ENCODE measurements at regions of chr19 and their contacts with region 1.

Region 1: GRCh38 chr19:36573020-36573885 is at the start of gene ZNF529:
- DNase-seq: peak; percentile 95 to 99 (median 98)
- H3K4me3 ChIP-seq: peak within 1 kb of the TSS; percentile 66 to 94 (median 90)
- H3K27ac ChIP-seq: peak within 1 kb of the TSS; percentile 90 to 96
- H3K4me1 ChIP-seq: peaks cover 9 to 22% (median 12%) of the 10 kb centered on the region in 4 experiments
- H3K27me3 ChIP-seq: no peaks in the 10 kb centered on the region

Region 2: GRCh38 chr19:36528194-36528920 is 44.9 kb before region 1 on chr19 and contains the start of gene ZNF260:
- CTCF ChIA-PET with region 1: no interaction called
- POLR2A ChIA-PET with region 1: interaction called, 10 read pairs
- DNase-seq: peak; percentile 98 to 99 (median 99)
- H3K4me3 ChIP-seq: peak within 1 kb of the TSS; percentile 48 to 99 (median 93)
- H3K27ac ChIP-seq: peak within 1 kb of the TSS; percentile 82 to 92
- H3K4me1 ChIP-seq: peaks cover 7 to 19% (median 12%) of the 10 kb centered on the region in 4 experiments
- H3K27me3 ChIP-seq: no peaks in the 10 kb centered on the region